Left ventricle myocardium superior (tissue), 1 donor: ENCODE measurements at regions of chr1 and their contacts with region 1.

Region 1: GRCh38 chr1:210584439-210585113 is 255.9 kb downstream of the HHAT start:
- DNase-seq: peak; percentile 83
- ATAC-seq: peak; percentile 90

Region 2: DNA sequence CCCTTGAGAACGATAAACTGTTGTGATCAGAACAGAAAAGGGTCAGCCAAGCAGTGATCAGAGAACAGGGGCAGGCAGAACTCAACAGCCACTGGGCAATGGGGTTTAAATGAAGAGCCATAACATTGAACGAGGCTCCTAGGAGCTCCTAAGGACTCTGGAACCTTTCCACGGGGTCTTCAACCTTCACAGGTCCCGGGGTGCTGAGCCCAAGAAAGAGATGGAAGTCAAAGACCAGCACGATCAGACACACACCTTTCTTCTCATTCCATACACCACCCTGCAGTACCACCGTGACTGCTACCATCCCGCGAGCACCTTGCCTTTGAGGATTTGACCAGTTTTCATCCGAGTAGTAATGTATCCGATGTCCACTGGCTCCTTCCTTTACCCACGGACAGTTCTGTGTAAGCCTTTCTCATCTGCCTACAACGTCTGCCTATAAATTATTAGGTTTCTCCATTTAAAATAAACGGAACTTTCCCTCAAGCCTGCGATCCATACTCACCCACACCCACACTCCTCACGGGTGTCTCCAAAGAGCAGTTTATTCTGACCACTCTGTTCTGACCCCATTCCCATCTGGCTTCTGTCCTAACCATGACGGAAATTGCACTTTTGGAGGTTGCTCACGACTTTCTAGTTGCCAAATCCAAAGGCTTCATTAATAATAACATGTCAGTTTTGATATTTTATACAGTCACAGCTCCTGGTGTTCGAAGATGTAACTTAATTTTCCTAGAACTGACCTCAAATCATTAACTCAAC is 272.7 kb before region 1 on chr1:
- intact Hi-C with region 1: no loop called
- DNase-seq: no peak
- ATAC-seq: peak; percentile 87

Region 3: DNA sequence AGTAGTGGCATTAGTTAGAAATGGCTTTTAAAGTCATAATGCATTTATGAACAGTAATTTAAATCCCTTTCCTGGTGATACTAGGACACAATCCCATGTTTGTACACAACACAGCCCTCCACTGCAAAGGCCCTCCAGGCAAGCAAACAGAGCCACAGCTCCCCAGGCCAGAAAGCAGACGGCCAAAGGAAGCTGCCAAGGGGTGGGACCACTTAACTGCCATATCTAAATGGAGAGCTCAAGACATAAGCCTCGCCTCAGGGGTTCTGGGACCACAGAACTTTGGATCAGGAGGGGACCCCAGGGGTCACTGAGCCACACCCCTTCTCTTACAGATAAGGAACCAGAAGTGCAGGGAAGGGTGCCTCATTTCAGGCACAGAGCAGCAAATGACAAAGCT is 359.7 kb after region 1 on chr1:
- intact Hi-C with region 1: loop called (anchors 10 kb)
- DNase-seq: no peak
- ATAC-seq: no peak

Region 4: DNA sequence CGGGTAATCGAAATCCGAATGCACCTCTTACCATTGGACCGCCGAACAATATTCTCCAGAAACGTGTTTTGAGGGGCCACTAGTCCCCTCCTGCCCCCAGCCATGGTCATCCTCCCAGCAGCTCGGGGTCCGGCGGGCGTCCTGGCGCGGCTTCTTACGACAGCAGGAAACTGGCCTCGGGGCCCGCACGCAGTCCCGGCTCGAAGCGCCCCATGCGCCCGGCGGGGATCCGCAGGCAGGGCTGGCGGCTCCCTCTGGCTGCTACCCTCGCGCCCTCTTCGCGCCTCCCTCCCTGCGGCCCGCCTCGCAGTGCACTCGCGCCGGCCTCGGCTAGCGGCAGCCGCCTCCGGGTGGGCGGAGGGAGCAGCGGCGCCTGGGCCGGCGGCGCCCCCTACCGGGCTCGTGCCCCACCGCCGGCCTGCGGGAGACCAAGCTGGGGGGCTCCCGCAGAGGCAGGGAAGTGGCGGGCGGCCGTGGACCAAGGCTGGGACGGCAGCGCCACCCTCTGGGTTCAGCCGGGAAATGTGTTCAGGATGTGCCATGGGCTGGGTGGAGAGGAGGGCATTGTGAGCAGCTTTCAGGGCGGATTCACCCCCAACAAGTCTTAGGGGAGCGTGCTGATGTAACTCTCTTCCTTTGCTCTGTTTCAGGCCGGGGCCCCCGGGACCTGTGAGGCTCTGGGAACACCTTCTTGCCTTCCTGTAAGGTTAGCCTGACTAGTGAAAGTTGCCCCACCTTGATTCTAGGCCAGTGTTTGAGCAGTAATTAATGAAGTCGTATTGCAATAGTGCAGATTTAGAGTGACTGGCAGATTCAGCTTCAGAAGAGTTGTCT is 549.5 kb after region 1 on chr1 and contains the start of gene KCNH1:
- intact Hi-C with region 1: loop called (anchors 5 kb)
- DNase-seq: peak; percentile 87
- ATAC-seq: peak; percentile 99
- total RNA-seq, gene KCNH1: not detected